ENCODE measurements at regions of chr3 and their contacts with region 1.

Region 1: GRCh38 chr3:67384760-67385397 is 269.5 kb downstream of the SUCLG2 start:
- DNase-seq: peak; percentile 50
- ATAC-seq: peak; percentile 54
- H3K4me3 ChIP-seq: no peak overlapping the region
- H3K27ac ChIP-seq: no peak overlapping the region
- H3K4me1 ChIP-seq: peaks cover 4% of the 10 kb centered on the region; the same call in 1 of the 2 replicates
- H3K27me3 ChIP-seq: no peaks in the 10 kb centered on the region
- CTCF ChIP-seq: peak; percentile 60
- POLR2A ChIP-seq: no peak
- RAD21 ChIP-seq: peak; percentile 68

Region 2: DNA sequence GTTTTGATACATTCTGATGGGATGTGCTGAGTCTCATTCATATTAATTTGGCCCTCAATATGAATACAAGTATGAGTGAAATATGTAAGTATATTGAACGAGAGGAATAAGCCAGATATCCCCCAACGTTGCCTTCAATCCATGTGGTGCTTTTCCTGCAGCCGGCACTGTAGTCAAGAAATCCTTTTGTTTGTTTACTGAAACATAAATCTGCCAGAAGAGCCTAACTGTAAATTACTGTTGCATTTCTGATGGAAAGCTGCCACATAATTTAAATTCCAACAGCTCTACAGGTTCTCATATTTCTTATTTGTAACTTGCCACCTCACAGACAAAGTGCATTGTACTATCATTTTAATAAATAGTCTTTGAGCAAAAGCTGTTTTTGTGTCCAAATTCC is 72.7 kb before region 1 on chr3:
- CTCF ChIA-PET with region 1: interaction called, 10 read pairs
- POLR2A ChIA-PET with region 1: no interaction called
- dilution Hi-C with region 1: no loop called
- in situ Hi-C with region 1: no loop called
- intact Hi-C with region 1: no loop called
- DNase-seq: no peak
- ATAC-seq: no peak
- H3K4me3 ChIP-seq: no peak overlapping the region
- H3K27ac ChIP-seq: no peak overlapping the region
- H3K4me1 ChIP-seq: no peaks in the 10 kb centered on the region
- H3K27me3 ChIP-seq: no peaks in the 10 kb centered on the region
- CTCF ChIP-seq: no peak
- POLR2A ChIP-seq: no peak
- RAD21 ChIP-seq: no peak

Region 3: DNA sequence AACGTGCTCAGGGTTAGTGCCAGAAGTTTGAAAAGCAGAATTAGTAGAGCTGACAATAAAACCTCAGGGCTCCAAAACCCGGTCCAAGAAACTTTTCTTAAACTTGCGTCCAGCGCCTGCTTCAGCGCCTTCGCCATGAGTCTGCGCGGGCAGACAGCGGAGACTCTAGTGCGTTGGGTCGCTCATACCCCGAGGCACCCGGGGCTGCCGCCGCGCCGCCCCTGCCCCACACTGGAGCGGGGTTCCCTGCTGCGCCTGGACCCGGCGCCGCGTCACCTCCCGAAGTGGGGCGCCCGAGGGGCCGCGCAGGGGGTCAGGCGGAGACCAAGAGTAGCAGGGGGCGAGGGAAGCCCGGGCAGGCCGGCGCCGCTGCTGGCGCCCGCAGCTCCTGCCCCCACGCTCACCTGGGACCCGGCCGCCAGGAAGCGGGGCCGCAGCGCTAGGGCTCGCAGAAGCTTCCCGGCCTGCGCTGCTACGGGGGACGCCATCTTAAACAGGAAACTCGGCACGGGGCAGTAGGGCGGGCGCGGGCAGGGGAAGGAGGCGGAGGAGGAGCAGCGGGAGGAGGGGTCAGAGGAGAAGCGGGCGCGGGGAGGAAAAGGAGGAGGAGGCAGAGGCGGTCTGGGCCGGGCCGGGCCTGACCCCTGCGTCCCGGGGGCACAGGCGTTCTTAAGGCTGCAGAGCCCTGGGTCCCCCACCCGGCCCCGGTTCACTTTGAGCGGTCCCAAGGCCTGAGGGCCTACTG is 269.4 kb after region 1 on chr3 and contains the start of gene SUCLG2:
- CTCF ChIA-PET with region 1: no interaction called
- POLR2A ChIA-PET with region 1: no interaction called
- dilution Hi-C with region 1: no loop called
- in situ Hi-C with region 1: no loop called
- intact Hi-C with region 1: loop called (anchors 1 kb)
- DNase-seq: peak; percentile 75
- ATAC-seq: peak; percentile 99
- H3K4me3 ChIP-seq: peak within 1 kb of the TSS; percentile 81
- H3K27ac ChIP-seq: peak within 1 kb of the TSS; percentile 91
- H3K4me1 ChIP-seq: peaks cover 4% of the 10 kb centered on the region
- H3K27me3 ChIP-seq: no peaks in the 10 kb centered on the region
- CTCF ChIP-seq: no peak
- POLR2A ChIP-seq: peak; percentile 86
- RAD21 ChIP-seq: no peak; the same call in 1 of the 2 replicates
- total RNA-seq, gene SUCLG2: 34.6 and 45.5 TPM in 2 replicates

Region 4: DNA sequence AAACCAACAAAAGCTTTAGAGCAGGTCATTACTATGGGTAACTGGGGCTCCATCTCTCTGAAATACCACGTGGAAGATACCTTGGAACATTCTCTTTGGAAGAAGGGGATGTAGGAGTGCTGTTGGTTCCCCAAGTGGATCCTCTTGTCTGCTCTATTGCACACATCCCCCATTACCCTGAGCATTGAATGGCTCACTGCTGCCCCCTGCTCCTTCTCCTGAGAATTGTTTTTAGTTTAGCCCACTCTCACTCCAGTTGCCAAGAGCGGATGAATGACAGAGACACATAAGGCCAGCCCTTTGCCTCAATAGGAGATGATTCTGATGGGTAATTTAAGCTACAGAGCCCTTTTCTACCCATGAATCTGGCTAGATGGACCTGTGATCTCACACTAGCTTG is 405.2 kb after region 1 on chr3:
- CTCF ChIA-PET with region 1: interaction called, 4 read pairs
- POLR2A ChIA-PET with region 1: no interaction called
- dilution Hi-C with region 1: no loop called
- in situ Hi-C with region 1: loop called (anchors 10 kb)
- intact Hi-C with region 1: loop called (anchors 1 kb)
- DNase-seq: peak; percentile 52
- ATAC-seq: peak; percentile 92
- H3K4me3 ChIP-seq: no peak overlapping the region
- H3K27ac ChIP-seq: no peak overlapping the region
- H3K4me1 ChIP-seq: no peaks in the 10 kb centered on the region
- H3K27me3 ChIP-seq: no peaks in the 10 kb centered on the region; the same call in 1 of the 2 replicates
- CTCF ChIP-seq: peak; percentile 83
- POLR2A ChIP-seq: no peak
- RAD21 ChIP-seq: peak; percentile 94

Region 5: DNA sequence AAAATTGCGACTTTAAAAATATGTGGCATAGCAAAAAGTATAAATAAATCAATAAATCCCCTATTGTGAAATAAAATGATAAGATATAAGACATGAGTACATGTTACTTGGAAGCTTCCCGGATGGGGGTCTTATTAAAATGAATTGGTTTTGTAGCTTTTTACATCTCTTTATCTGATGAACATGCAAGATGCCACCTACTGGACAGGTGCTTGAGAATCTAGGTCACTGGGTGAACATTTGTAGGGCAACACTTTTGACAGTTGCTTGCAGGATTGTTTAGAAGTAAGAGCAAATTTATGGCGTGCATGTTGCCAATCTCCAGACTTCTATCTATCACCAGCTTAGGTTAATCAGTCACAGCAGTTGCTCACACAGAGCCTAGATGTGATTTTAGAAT is 632.2 kb after region 1 on chr3:
- CTCF ChIA-PET with region 1: no interaction called
- POLR2A ChIA-PET with region 1: no interaction called
- dilution Hi-C with region 1: no loop called
- in situ Hi-C with region 1: no loop called
- intact Hi-C with region 1: loop called (anchors 10 kb)
- DNase-seq: no peak
- ATAC-seq: no peak
- H3K4me3 ChIP-seq: no peak overlapping the region
- H3K27ac ChIP-seq: no peak overlapping the region
- H3K4me1 ChIP-seq: no peaks in the 10 kb centered on the region
- H3K27me3 ChIP-seq: no peaks in the 10 kb centered on the region
- CTCF ChIP-seq: no peak
- POLR2A ChIP-seq: no peak
- RAD21 ChIP-seq: no peak

Measured in IMR-90 (cell line).